Activated CD4-positive, alpha-beta T cell treated with anti-CD3 and anti-CD28 coated beads, Interleukin-2, amount 10 ng/mL, durations not matched to agents 24 days and 14 days (primary cell): ENCODE measurements at regions of chr6 and their contacts with region 1.

Region 1: DNA sequence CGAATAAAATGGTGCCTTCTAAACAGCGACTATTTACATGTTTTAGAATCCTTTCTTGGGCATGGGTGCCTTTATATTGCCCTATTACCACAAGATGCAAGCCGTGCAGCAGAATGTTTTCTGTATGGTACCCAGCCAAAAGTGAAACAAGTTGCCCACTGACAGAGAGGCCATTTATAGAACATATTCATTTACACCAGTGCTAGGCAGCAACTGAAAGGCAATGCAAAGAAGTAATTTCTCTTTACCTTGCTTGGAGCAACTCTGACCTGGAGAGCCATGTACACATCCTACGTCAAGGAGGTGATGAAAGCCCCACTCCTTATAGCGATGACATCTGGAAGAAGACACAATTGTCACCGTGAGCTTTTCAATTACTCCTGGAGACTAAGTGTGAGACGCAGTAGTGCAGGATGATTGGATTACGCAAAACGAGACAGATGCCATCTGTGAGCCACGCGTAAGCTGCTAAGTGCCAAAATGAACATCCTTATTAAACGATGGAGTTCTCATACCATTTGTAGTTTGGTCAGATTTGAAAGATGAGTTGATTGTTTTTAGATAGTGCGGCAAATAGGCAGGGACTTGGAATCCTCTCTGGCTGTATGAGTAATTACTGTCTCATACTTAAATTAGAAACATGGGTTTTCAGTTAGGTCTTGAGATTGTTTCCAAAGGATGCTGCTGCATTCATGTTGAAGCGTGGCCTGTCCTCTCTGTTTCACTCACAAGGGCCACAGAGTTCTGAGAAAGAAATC is at the start of gene TMEM244:
- DNase-seq: no peak
- H3K4me3 Mint-ChIP-seq: peak within 1 kb of the TSS; percentile 67
- H3K27ac Mint-ChIP-seq: no peak within 1 kb of the TSS
- H3K4me1 Mint-ChIP-seq: peaks cover 11% of the 10 kb centered on the region
- H3K27me3 Mint-ChIP-seq: no peaks in the 10 kb centered on the region
- total RNA-seq, gene TMEM244: not detected in 2 replicates

Region 2: DNA sequence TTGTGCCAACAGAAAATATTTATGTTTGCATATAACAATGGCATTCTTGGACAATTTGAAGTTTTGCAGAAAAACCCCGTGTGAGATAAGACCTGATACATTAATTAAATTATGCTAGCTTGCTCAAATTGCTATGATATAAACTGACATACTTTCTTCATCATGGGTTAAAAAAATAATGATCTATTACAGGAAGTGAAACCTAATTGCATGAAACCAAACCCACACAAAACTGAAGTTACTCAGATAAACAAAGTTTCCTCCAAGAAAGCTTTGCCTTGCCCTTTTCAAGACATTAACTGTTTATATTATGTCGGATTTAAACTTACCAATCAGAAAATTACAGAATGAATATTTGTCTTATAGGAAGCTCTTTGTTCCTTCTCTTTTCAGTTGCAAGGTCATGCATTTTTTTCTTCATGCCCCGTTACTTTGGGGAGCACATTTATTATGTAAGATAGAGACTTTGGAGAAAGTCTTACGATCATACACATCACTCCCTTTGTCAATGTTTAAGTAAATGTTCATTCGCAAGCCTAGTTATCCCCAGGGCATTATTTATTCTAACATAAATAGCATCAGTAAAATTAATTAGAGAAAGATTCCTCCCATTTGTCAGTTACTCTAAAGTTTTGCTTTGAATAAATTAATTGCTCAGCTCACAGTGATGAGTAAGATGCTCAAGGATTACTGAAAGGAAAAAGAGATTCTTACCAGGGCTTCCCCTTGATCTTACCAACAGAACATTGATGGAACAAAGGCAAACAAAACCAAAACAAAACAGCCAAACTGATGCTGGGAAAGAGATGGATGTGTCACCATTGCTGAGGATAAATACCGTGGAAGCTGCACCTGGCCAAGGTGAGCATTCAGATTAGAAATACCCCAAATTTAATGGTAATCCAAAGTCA is 14.8 kb after region 1 on chr6:
- intact Hi-C with region 1: loop called (anchors 2 kb)
- DNase-seq: no peak
- H3K4me3 Mint-ChIP-seq: peak overlapping the region; percentile 20
- H3K27ac Mint-ChIP-seq: peak overlapping the region; percentile 17
- H3K4me1 Mint-ChIP-seq: peaks cover 10% of the 10 kb centered on the region
- H3K27me3 Mint-ChIP-seq: peaks cover 5% of the 10 kb centered on the region